A673 (cell line): ENCODE measurements at regions of chr5 and their contacts with region 1.

Region 1: GRCh38 chr5:37957239-37957638 is 117.4 kb upstream of the GDNF start:
- DNase-seq: no peak
- H3K4me3 ChIP-seq: no peak overlapping the region
- H3K27ac ChIP-seq: no peak overlapping the region
- H3K4me1 ChIP-seq: no peaks in the 10 kb centered on the region
- H3K27me3 ChIP-seq: no peaks in the 10 kb centered on the region
- CTCF ChIP-seq: no peak

Region 2: DNA sequence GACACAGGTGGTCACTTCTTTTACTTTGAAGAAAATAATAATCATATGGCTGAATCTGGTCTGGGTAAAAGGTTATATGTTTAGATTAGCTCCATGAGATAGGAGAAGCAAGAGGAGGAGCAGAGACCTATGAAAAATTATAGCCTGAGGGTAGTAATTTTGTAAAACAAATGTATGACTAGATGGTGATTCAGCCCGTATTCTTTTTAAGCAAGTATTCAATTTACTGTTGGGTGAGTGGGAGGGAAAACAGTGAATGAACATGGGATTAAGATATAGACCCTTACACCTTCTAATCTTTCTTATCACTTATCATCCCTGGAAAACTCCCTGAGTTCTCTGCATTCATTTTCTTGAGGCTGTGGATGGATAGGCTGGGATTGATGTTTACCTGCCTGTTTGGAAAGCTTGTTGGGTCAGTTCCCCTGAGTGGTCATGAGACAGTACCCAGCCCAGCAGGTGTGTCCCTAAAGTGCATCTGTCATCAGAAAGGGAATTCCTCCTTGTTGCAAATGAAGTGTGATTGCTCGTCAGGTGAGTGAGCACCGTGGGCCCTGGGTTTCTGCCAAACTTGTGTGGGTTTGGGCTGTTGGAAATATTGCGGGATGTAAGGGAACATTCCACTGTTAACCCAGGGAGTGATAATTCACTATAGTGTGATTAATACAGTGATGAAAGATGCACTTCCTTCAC is 16.2 kb before region 1 on chr5:
- CTCF ChIA-PET with region 1: no interaction called
- POLR2A ChIA-PET with region 1: no interaction called
- intact Hi-C with region 1: loop called (anchors 1 kb)
- DNase-seq: no peak
- H3K4me3 ChIP-seq: no peak overlapping the region
- H3K27ac ChIP-seq: no peak overlapping the region
- H3K4me1 ChIP-seq: no peaks in the 10 kb centered on the region
- H3K27me3 ChIP-seq: no peaks in the 10 kb centered on the region
- CTCF ChIP-seq: no peak

Region 3: DNA sequence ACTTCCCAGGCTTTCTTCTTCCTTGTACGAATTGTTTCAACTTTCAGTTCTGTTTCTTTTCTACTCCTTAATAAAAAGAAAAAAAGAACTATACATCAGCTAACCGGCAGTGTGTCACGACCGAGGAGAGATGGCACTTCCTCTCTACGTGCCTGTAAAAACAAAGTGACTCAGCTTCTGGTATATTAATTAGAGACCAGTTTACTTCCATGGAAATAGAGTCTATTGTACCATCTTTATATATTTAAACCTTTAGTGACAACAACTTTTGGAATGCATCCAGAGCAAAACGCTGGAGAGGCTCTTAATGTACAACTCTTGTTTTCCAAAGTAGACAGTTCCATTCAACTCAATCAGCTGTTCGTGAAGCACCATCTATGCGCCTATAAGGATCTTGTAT is 693.7 kb after region 1 on chr5:
- CTCF ChIA-PET with region 1: no interaction called
- POLR2A ChIA-PET with region 1: no interaction called
- intact Hi-C with region 1: no loop called
- DNase-seq: peak; percentile 37
- H3K4me3 ChIP-seq: peak overlapping the region; percentile 23
- H3K27ac ChIP-seq: no peak overlapping the region
- H3K4me1 ChIP-seq: peaks cover 3% of the 10 kb centered on the region
- H3K27me3 ChIP-seq: no peaks in the 10 kb centered on the region
- CTCF ChIP-seq: no peak